H1 (cell line): ENCODE measurements at regions of chr1 and their contacts with region 1.

Region 1: DNA sequence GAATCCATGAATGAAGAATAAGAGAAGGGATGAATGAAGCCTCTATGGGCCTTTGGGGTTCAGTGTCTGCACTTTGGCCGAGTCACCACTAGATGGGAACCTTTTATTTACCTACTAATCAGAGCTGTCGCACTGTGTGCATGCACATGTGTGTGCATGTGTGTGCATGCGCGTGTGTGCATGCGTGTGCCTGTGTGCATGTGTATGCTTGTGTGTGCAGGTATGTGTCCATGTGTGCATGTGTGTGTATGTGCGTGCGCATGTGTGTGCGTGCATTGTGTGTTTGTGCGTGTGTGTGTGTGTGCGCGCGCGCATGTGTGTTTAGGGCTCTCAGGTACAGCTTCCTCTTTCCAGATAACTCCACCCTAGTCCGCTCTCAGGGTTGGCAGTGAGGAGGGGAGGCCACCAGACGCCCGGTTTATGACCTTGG is 20.4 kb upstream of the UBXN10 start:
- DNase-seq: no peak
- H3K4me3 ChIP-seq: no peak overlapping the region
- H3K27ac ChIP-seq: no peak overlapping the region
- H3K4me1 ChIP-seq: peaks cover 0 to 5% (median 0%) of the 10 kb centered on the region in 4 experiments; a peak in 2 of 7 replicates
- H3K27me3 ChIP-seq: no peaks in the 10 kb centered on the region
- CTCF ChIP-seq: peak; percentile 33 to 74 (median 65)
- EP300 ChIP-seq: no peak
- POLR2A ChIP-seq: no peak
- RAD21 ChIP-seq: peak; percentile 58 to 74

Region 2: GRCh38 chr1:19974822-19975416 is 190.6 kb before region 1 on chr1:
- CTCF ChIA-PET with region 1: interaction called, 39 read pairs
- POLR2A ChIA-PET with region 1: no interaction called
- DNase-seq: peak; percentile 34 to 64
- H3K4me3 ChIP-seq: no peak overlapping the region
- H3K27ac ChIP-seq: no peak overlapping the region
- H3K4me1 ChIP-seq: peaks cover 0 to 8% (median 0%) of the 10 kb centered on the region in 4 experiments; a peak in 2 of 7 replicates
- H3K27me3 ChIP-seq: no peaks in the 10 kb centered on the region
- CTCF ChIP-seq: peak; percentile 87 to 100 (median 95)
- EP300 ChIP-seq: no peak
- POLR2A ChIP-seq: no peak
- RAD21 ChIP-seq: peak; percentile 100

Region 3: GRCh38 chr1:20058531-20058930 is 107.0 kb before region 1 on chr1:
- CTCF ChIA-PET with region 1: no interaction called
- POLR2A ChIA-PET with region 1: no interaction called
- DNase-seq: peak in 1 of 2 experiments; percentile 2
- H3K4me3 ChIP-seq: no peak overlapping the region
- H3K27ac ChIP-seq: no peak overlapping the region
- H3K4me1 ChIP-seq: no peaks in the 10 kb centered on the region
- H3K27me3 ChIP-seq: no peaks in the 10 kb centered on the region
- CTCF ChIP-seq: no peak
- EP300 ChIP-seq: no peak
- POLR2A ChIP-seq: no peak
- RAD21 ChIP-seq: no peak

Region 4: DNA sequence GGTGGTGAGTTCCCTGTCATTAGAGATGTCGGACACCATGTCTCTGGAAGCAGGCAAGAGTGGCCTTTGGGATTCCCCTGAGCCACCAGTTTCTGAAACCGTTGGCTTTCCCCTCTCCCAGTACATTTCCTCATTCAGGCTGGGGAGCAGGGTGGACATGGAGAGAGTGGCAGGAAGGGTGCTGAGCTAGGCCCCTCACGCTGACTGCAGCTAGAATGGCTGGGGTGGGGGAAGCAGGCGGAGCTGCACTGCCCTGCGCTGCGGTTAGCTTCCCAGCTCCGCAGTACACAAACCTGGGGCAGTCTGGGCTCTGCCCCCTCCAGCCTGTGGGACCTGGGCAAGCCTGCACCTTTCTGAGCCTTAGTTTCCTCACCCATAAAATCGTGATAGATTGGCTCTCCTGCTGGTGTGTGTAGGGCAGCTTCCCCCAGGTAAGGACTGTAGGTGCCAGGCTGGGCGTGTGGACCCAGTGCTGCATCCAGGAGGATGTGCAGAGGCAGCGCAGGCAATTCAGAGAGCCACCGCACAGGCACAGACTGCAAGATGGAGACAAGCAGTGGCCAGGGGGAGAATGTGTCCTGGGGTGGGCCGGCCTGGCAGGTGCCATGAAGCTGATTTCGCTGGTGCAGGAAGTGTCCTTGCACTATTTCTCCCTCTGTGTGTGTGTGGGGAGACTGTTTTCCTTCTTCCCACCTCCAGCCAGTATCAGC is 23.4 kb before region 1 on chr1:
- CTCF ChIA-PET with region 1: interaction called, 12 read pairs
- POLR2A ChIA-PET with region 1: no interaction called
- DNase-seq: no peak
- H3K4me3 ChIP-seq: no peak overlapping the region
- H3K27ac ChIP-seq: no peak overlapping the region
- H3K4me1 ChIP-seq: no peaks in the 10 kb centered on the region; a peak in 1 of 7 replicates
- H3K27me3 ChIP-seq: no peaks in the 10 kb centered on the region
- CTCF ChIP-seq: no peak
- EP300 ChIP-seq: no peak
- POLR2A ChIP-seq: no peak
- RAD21 ChIP-seq: no peak

Region 5: GRCh38 chr1:20187103-20187812 is 21.7 kb after region 1 on chr1:
- CTCF ChIA-PET with region 1: interaction called, 89 read pairs
- POLR2A ChIA-PET with region 1: no interaction called
- DNase-seq: no peak
- H3K4me3 ChIP-seq: peak overlapping the region in 1 of 4 experiments; percentile 82; a peak in 2 of 8 replicates
- H3K27ac ChIP-seq: no peak overlapping the region
- H3K4me1 ChIP-seq: peaks cover 6 to 10% (median 9%) of the 10 kb centered on the region in 4 experiments; a peak in 4 of 7 replicates
- H3K27me3 ChIP-seq: peaks cover 0 to 13% (median 10%) of the 10 kb centered on the region in 4 experiments; a peak in 5 of 7 replicates
- CTCF ChIP-seq: no peak
- EP300 ChIP-seq: no peak
- POLR2A ChIP-seq: no peak
- RAD21 ChIP-seq: no peak

Region 6: GRCh38 chr1:20212685-20213331 is 47.3 kb after region 1 on chr1:
- CTCF ChIA-PET with region 1: interaction called, 10 read pairs
- POLR2A ChIA-PET with region 1: no interaction called
- DNase-seq: peak; percentile 81 to 82
- H3K4me3 ChIP-seq: peak overlapping the region in 1 of 4 experiments; percentile 16; a peak in 1 of 8 replicates
- H3K27ac ChIP-seq: no peak overlapping the region
- H3K4me1 ChIP-seq: peaks cover 0 to 4% (median 2%) of the 10 kb centered on the region in 4 experiments; a peak in 3 of 7 replicates
- H3K27me3 ChIP-seq: no peaks in the 10 kb centered on the region; a peak in 1 of 7 replicates
- CTCF ChIP-seq: peak; percentile 32 to 90 (median 43)
- EP300 ChIP-seq: peak in 1 of 2 experiments; percentile 56; a peak in 1 of 3 replicates
- POLR2A ChIP-seq: no peak
- RAD21 ChIP-seq: peak; percentile 79 to 88

Region 7: GRCh38 chr1:20411196-20411980 is 245.9 kb after region 1 on chr1:
- CTCF ChIA-PET with region 1: no interaction called
- POLR2A ChIA-PET with region 1: no interaction called
- DNase-seq: peak in 1 of 2 experiments; percentile 29
- H3K4me3 ChIP-seq: no peak overlapping the region
- H3K27ac ChIP-seq: no peak overlapping the region
- H3K4me1 ChIP-seq: 0 out of 7 replicates have a peak, but pooled peaks cover 0 to 3% (median 0%) of the 10 kb centered on the region in 4 experiments
- H3K27me3 ChIP-seq: peaks cover 15 to 68% (median 39%) of the 10 kb centered on the region in 4 experiments
- CTCF ChIP-seq: no peak
- EP300 ChIP-seq: no peak
- POLR2A ChIP-seq: no peak
- RAD21 ChIP-seq: no peak